Naive thymus-derived CD4-positive, alpha-beta T cell (primary cell): ENCODE measurements at regions of chr10 and their contacts with region 1.

Region 1: DNA sequence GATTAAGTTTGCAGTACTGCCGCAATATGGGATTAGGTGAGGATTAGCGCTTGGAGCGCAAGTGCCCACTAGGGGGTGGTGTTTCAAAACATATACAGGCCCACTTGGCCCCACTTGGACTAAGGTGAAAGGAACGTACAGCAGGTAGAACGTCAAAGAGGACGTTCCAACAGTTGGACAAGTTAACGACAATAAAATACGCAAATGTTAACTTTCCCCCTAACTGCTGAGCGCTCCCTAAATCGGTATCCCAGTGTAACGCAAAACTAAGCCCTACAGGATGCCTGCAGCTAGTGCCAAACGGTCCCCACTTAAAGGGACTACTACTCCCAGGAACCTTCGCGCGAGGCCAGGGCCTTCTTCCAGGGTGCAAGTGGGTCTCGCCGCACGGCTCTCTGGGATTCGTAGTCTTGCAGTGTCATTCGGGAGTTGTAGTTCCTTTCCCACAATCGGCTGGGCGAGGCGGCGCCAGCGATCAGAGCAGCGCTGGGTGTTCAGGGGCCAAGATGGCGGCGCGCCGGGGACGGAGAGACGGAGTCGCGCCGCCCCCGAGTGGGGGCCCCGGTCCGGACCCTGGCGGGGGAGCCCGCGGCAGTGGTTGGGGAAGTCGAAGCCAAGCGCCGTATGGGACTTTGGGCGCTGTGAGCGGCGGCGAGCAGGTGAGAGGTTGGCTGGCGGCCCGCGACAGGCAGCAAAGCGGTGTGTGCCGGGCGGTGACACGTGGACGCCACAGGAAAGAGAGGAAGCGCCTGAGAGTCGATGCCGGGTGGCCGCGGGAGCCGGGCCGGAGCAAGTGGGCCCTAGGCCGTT is at the start of gene PPRC1:
- DNase-seq: peak; percentile 88 to 98 (median 97)
- ATAC-seq: peak; percentile 97
- H3K4me3 ChIP-seq: peak within 1 kb of the TSS; percentile 80
- H3K4me3 Mint-ChIP-seq: peak within 1 kb of the TSS; percentile 90 to 99 (median 98)
- H3K27ac ChIP-seq: peak within 1 kb of the TSS; percentile 89
- H3K27ac Mint-ChIP-seq: peak within 1 kb of the TSS; percentile 89 to 99 (median 96)
- H3K4me1 ChIP-seq: peaks cover 15 to 26% of the 10 kb centered on the region in 2 donors
- H3K4me1 Mint-ChIP-seq: peaks cover 29 to 53% (median 47%) of the 10 kb centered on the region in 7 donors
- H3K27me3 ChIP-seq: no peaks in the 10 kb centered on the region
- H3K27me3 Mint-ChIP-seq: no peaks in the 10 kb centered on the region
- total RNA-seq, gene PPRC1: 33.7 to 56.5 (median 40.6) TPM

Region 2: GRCh38 chr10:101130984-101131961 is 1001.5 kb before region 1 on chr10 and contains the start of gene TLX1:
- CTCF ChIA-PET with region 1: no interaction called
- POLR2A ChIA-PET with region 1: no interaction called
- intact Hi-C with region 1: no loop called
- DNase-seq: no peak
- ATAC-seq: peak; percentile 38
- H3K4me3 ChIP-seq: no peak within 1 kb of the TSS
- H3K4me3 Mint-ChIP-seq: peak within 1 kb of the TSS in 9 of 10 donors; percentile 58 to 81 (median 75)
- H3K27ac ChIP-seq: no peak within 1 kb of the TSS
- H3K27ac Mint-ChIP-seq: peak within 1 kb of the TSS in 1 of 9 donors; percentile 18
- H3K4me1 ChIP-seq: peaks cover 0 to 23% of the 10 kb centered on the region in 2 donors
- H3K4me1 Mint-ChIP-seq: peaks cover 16 to 40% (median 28%) of the 10 kb centered on the region in 7 donors
- H3K27me3 ChIP-seq: peaks cover 11 to 26% of the 10 kb centered on the region in 2 donors
- H3K27me3 Mint-ChIP-seq: peaks cover 75 to 89% (median 83%) of the 10 kb centered on the region in 5 donors
- total RNA-seq, gene TLX1: not detected

Region 3: GRCh38 chr10:101830322-101831168 is 302.2 kb before region 1 on chr10:
- CTCF ChIA-PET with region 1: no interaction called
- POLR2A ChIA-PET with region 1: no interaction called
- intact Hi-C with region 1: loop called in 1 of 2 experiments (anchors 5 kb)
- DNase-seq: peak; percentile 89 to 98 (median 95)
- ATAC-seq: peak; percentile 90
- H3K4me3 ChIP-seq: peak overlapping the region; percentile 66
- H3K4me3 Mint-ChIP-seq: peak overlapping the region; percentile 79 to 94 (median 88)
- H3K27ac ChIP-seq: peak overlapping the region; percentile 85
- H3K27ac Mint-ChIP-seq: peak overlapping the region; percentile 94 to 100 (median 99)
- H3K4me1 ChIP-seq: peaks cover 22 to 53% of the 10 kb centered on the region in 2 donors
- H3K4me1 Mint-ChIP-seq: peaks cover 41 to 59% (median 53%) of the 10 kb centered on the region in 7 donors
- H3K27me3 ChIP-seq: no peaks in the 10 kb centered on the region
- H3K27me3 Mint-ChIP-seq: peaks cover 0 to 4% (median 0%) of the 10 kb centered on the region in 5 donors

Region 4: GRCh38 chr10:102024799-102025198 is 108.0 kb before region 1 on chr10:
- CTCF ChIA-PET with region 1: no interaction called
- POLR2A ChIA-PET with region 1: no interaction called
- intact Hi-C with region 1: no loop called
- DNase-seq: no peak
- ATAC-seq: peak; percentile 16
- H3K4me3 ChIP-seq: no peak overlapping the region
- H3K4me3 Mint-ChIP-seq: no peak overlapping the region
- H3K27ac ChIP-seq: no peak overlapping the region
- H3K27ac Mint-ChIP-seq: peak overlapping the region in 1 of 9 donors; percentile 3
- H3K4me1 ChIP-seq: no peaks in the 10 kb centered on the region
- H3K4me1 Mint-ChIP-seq: peaks cover 0 to 4% (median 0%) of the 10 kb centered on the region in 7 donors
- H3K27me3 ChIP-seq: no peaks in the 10 kb centered on the region
- H3K27me3 Mint-ChIP-seq: no peaks in the 10 kb centered on the region

Region 5: GRCh38 chr10:102120142-102120990 is 12.4 kb before region 1 on chr10 and contains the start of gene LDB1:
- CTCF ChIA-PET with region 1: interaction called, 12 read pairs
- POLR2A ChIA-PET with region 1: interaction called, 15 read pairs
- intact Hi-C with region 1: loop called (anchors 1 kb)
- DNase-seq: peak; percentile 51 to 74 (median 67)
- ATAC-seq: peak; percentile 70
- H3K4me3 ChIP-seq: peak within 1 kb of the TSS; percentile 90
- H3K4me3 Mint-ChIP-seq: peak within 1 kb of the TSS; percentile 88 to 98 (median 94)
- H3K27ac ChIP-seq: peak within 1 kb of the TSS; percentile 97
- H3K27ac Mint-ChIP-seq: peak within 1 kb of the TSS; percentile 80 to 98 (median 94)
- H3K4me1 ChIP-seq: peaks cover 40 to 43% of the 10 kb centered on the region in 2 donors
- H3K4me1 Mint-ChIP-seq: peaks cover 36 to 65% (median 57%) of the 10 kb centered on the region in 7 donors
- H3K27me3 ChIP-seq: no peaks in the 10 kb centered on the region
- H3K27me3 Mint-ChIP-seq: no peaks in the 10 kb centered on the region
- total RNA-seq, gene LDB1: 101 to 152 (median 115) TPM

Region 6: DNA sequence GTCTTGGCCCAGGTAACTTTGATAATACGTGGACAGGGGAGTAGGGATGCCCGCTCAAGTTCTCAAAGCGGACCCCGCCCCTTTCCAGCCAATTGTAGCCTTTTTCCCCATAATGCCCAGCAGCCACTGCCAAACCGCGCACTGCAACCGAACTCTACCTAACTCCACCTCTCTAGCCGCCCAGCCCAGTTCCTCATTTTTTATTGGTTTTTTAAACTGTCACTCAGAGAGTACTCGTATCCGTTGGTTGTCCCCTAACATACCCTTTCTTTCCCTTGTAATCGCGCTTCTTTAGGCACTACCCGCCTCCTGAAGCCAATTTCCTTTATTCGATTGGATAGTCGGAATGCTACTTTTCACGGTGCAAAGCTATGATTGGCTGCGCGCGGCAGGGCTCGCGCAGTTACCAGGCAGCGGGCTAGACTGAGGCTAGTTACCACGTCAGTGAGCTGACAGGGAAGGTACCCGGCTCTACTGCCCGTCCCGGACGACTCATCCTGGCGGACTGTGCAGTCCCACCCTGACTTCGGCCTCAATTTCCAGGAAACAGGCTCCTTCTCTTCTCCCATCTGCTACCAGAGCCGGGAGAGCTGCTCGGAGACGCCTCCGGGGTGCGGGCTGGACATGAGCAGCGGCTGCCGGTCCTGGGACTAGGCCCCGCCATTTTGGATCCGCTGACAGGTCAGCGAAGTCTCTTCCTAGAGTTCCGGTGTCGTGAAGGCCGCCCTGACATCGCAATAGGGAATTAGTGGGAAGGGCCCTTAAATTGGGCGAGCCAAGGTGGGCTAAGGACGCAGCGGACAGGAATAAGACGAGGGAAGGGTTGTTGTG is 112.5 kb after region 1 on chr10 and contains the start of gene GBF1:
- CTCF ChIA-PET with region 1: no interaction called
- POLR2A ChIA-PET with region 1: no interaction called
- intact Hi-C with region 1: loop called (anchors 1 kb)
- DNase-seq: peak; percentile 69 to 97 (median 96)
- ATAC-seq: peak; percentile 92
- H3K4me3 ChIP-seq: peak within 1 kb of the TSS; percentile 84
- H3K4me3 Mint-ChIP-seq: peak within 1 kb of the TSS; percentile 83 to 100 (median 97)
- H3K27ac ChIP-seq: peak within 1 kb of the TSS; percentile 90
- H3K27ac Mint-ChIP-seq: peak within 1 kb of the TSS; percentile 65 to 98 (median 95)
- H3K4me1 ChIP-seq: peaks cover 17 to 37% of the 10 kb centered on the region in 2 donors
- H3K4me1 Mint-ChIP-seq: peaks cover 43 to 69% (median 54%) of the 10 kb centered on the region in 7 donors
- H3K27me3 ChIP-seq: peaks cover 0 to 16% of the 10 kb centered on the region in 2 donors
- H3K27me3 Mint-ChIP-seq: peaks cover 14 to 27% (median 22%) of the 10 kb centered on the region in 5 donors
- total RNA-seq, gene GBF1: 36.2 to 47.2 (median 37.8) TPM

Region 7: GRCh38 chr10:102713814-102714620 is 581.2 kb after region 1 on chr10 and contains the start of gene ARL3:
- CTCF ChIA-PET with region 1: no interaction called
- POLR2A ChIA-PET with region 1: no interaction called
- intact Hi-C with region 1: loop called in 1 of 2 experiments (anchors 2 kb)
- DNase-seq: peak; percentile 75 to 95 (median 89)
- ATAC-seq: peak; percentile 96
- H3K4me3 ChIP-seq: peak within 1 kb of the TSS; percentile 98
- H3K4me3 Mint-ChIP-seq: peak within 1 kb of the TSS; percentile 86 to 98 (median 94)
- H3K27ac ChIP-seq: peak within 1 kb of the TSS; percentile 92
- H3K27ac Mint-ChIP-seq: peak within 1 kb of the TSS; percentile 66 to 95 (median 90)
- H3K4me1 ChIP-seq: peaks cover 4 to 18% of the 10 kb centered on the region in 2 donors
- H3K4me1 Mint-ChIP-seq: peaks cover 26 to 52% (median 43%) of the 10 kb centered on the region in 7 donors
- H3K27me3 ChIP-seq: no peaks in the 10 kb centered on the region
- H3K27me3 Mint-ChIP-seq: no peaks in the 10 kb centered on the region
- total RNA-seq, gene ARL3: 1.3 to 5.1 (median 2.9) TPM

Region 8: GRCh38 chr10:103367782-103368518 is 1235.2 kb after region 1 on chr10 and contains the start of gene TAF5:
- CTCF ChIA-PET with region 1: no interaction called
- POLR2A ChIA-PET with region 1: no interaction called
- intact Hi-C with region 1: loop called (anchors 5 kb)
- DNase-seq: peak; percentile 70 to 94 (median 90)
- ATAC-seq: peak; percentile 88
- H3K4me3 ChIP-seq: peak within 1 kb of the TSS; percentile 58
- H3K4me3 Mint-ChIP-seq: peak within 1 kb of the TSS; percentile 92 to 99 (median 96)
- H3K27ac ChIP-seq: peak within 1 kb of the TSS; percentile 77
- H3K27ac Mint-ChIP-seq: peak within 1 kb of the TSS; percentile 84 to 98 (median 94)
- H3K4me1 ChIP-seq: peaks cover 4 to 11% of the 10 kb centered on the region in 2 donors
- H3K4me1 Mint-ChIP-seq: peaks cover 0 to 35% (median 23%) of the 10 kb centered on the region in 7 donors
- H3K27me3 ChIP-seq: no peaks in the 10 kb centered on the region
- H3K27me3 Mint-ChIP-seq: no peaks in the 10 kb centered on the region
- total RNA-seq, gene TAF5: 4.7 to 8.9 (median 7.1) TPM

Region 9: GRCh38 chr10:103569896-103570295 is 1437.1 kb after region 1 on chr10:
- CTCF ChIA-PET with region 1: no interaction called
- POLR2A ChIA-PET with region 1: no interaction called
- intact Hi-C with region 1: no loop called
- DNase-seq: no peak
- ATAC-seq: no peak
- H3K4me3 ChIP-seq: no peak overlapping the region
- H3K4me3 Mint-ChIP-seq: no peak overlapping the region
- H3K27ac ChIP-seq: no peak overlapping the region
- H3K27ac Mint-ChIP-seq: no peak overlapping the region
- H3K4me1 ChIP-seq: no peaks in the 10 kb centered on the region
- H3K4me1 Mint-ChIP-seq: peaks cover 0 to under 1% (median 0%) of the 10 kb centered on the region in 7 donors
- H3K27me3 ChIP-seq: no peaks in the 10 kb centered on the region
- H3K27me3 Mint-ChIP-seq: peaks cover 0 to 5% (median 0%) of the 10 kb centered on the region in 5 donors